ACHN (cell line): ENCODE measurements at regions of chr12 and their contacts with region 1.

Region 1: DNA sequence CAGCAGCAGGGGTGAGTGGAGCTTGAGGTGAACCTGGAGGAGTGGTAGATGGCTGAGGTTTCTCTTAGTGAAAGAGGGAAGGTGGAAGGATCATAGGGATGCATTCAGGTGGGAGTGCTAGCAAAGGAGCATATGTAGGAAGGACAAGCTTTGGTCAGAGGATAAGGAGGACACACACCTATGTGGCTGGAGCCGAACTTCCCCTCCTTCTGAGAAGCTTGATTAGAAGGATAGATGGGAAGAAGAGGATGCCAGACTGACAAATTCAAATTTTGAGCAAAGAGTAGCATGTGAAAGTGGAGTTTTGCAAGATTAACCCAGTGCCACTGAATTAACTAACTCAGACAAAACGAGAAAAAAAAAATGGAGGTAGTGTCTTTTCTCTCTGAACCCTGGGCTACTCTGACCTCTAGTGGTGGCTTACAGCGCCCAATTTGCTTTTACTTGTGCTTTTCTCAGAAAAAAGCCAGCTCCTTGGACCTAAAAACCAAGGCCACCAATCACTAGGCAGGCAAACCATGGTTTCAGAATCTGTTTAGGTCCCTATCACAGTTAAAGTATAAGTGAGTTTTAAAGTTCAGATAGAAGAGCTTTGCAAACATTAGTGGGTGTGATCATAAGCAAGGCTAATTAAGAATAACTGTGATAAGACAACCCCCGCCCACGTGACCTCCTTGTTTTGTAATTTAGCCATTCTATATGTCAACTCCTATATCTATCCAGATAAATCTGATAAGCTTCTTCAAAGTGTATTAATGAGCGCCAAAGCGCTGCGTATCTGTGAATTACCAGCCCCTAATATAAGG is 15.5 kb downstream of the EMP1 start:
- DNase-seq: peak; percentile 89

Region 2: GRCh38 chr12:12916135-12916944 is 295.7 kb before region 1 on chr12:
- in situ Hi-C with region 1: loop called (anchors 25 kb)
- DNase-seq: peak; percentile 87

Region 3: GRCh38 chr12:12999959-13000615 is 212.0 kb before region 1 on chr12 and contains the start of gene HEBP1:
- in situ Hi-C with region 1: loop called (anchors 25 kb)
- DNase-seq: peak; percentile 92

Region 4: DNA sequence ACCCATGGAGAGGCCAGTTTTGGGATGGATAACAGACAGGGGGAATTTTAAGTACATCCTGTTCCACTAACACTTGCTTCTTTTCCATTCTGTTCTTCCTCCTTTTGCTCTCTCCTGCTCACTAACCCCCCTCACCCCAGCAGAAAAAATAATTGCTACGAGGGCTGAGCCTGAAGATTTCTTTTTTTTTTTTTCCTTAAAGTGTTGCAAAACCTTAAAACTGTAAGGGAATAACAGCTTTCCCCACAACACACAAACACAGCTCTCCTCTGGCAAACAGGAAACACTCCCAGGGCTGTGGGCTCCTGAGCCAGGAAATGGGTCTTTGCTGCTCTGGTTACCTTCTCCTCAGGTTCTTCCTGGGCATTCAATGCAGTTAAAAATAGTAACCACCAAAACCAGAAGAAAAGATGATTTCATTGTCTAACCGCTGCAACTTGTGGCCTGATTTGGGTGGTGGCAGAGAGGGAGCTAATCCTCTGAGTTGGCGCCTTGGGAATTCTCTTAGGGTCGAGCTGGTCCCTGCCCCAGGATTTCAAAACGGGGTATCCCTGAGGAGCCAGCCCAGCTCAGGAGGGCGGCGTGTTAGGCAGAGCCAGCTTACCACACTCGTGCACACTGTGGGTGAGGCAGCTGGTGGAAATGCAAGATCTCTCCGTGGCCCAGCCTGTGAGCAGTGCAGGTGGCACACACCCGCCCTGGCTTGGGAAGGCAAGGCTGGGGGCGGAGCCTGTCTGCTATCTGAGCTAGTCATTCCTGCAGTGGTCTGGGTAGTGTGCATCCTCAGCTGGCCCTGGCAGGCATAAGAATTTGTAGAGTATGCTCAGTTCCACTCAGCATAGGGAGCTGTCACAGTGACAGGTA is 32.6 kb before region 1 on chr12:
- in situ Hi-C with region 1: no loop called
- DNase-seq: peak; percentile 84